AG04450 (cell line): ENCODE measurements at regions of chr20 and their contacts with region 1.

Region 1: DNA sequence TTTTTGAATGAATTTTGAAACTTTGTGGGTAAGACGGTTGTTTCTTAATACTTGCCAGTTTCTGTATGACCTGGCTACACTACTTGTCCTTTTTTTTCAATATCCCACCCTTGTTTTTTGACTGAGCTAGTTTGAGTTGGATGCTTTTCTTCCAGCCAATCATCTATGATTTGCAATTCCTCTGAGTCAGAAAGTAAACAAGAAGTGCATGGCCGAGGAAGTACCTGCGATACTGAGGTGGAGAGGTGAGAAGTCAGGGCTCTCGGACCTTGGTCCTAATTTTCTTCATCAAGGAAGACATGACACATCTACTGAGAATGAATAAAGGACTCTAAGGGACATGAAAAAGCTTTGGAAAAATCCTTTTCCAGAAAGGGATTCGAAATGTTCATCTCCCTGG is 185.7 kb downstream of the LINC00237 start:
- DNase-seq: no peak
- H3K4me3 ChIP-seq: no peak overlapping the region
- H3K27ac ChIP-seq: no peak overlapping the region
- H3K27me3 ChIP-seq: no peaks in the 10 kb centered on the region
- CTCF ChIP-seq: no peak

Region 2: GRCh38 chr20:19628570-19629169 is 1291.8 kb before region 1 on chr20:
- CTCF ChIA-PET with region 1: interaction called, 10 read pairs
- POLR2A ChIA-PET with region 1: no interaction called
- DNase-seq: peak; percentile 24
- H3K4me3 ChIP-seq: no peak overlapping the region
- H3K27ac ChIP-seq: no peak overlapping the region
- H3K27me3 ChIP-seq: no peaks in the 10 kb centered on the region
- CTCF ChIP-seq: peak; percentile 71